Astrocyte of the spinal cord (primary cell): ENCODE measurements at regions of chr11 and their contacts with region 1.

Region 1: DNA sequence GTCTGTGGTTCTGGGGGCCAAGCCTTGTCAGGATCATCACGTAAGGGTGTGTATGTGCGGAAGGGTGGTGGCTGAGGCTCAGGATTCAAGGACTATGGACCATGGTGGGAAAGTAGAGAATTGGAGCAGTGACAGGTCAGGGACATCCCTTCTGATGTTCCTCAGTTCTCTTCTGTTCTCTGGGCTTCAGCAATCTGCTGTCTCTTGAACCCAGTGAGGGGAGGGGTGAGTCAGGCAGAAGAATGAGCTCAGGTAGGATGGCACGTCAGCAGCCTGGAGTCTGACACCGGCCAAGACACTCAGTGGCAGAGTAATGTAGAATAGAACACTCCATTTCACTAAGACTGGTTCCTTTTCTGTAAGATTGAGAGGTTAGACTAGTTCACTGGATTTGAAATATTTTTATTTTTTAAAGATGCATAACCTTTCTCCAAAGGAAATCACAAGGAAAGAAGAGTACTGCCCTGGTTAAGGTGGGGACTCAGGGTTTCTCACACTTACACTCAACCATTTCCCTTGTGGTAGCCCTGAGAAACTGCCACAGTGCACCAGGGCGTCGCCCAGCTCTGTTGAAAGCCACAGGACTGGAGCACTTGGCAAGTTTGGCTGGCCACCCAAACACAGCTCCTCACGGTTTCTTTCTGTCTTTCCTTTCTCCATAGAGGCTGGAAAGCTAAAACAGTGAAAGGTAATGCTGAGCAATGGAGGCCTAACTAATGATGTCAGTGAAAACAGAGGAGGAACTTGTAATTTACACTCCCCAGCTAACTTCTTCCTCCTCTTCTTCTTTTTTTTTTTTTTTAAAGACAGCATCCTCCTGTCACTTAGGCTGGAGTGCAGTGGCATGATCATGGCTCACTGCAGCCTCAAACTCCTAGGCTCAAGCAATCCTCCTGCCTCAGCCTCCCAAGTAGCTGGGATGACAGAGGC is 23.1 kb upstream of the MICAL2 start:
- DNase-seq: peak; percentile 79
- H3K4me3 ChIP-seq: peak overlapping the region; percentile 16
- CTCF ChIP-seq: peak; percentile 33

Region 2: DNA sequence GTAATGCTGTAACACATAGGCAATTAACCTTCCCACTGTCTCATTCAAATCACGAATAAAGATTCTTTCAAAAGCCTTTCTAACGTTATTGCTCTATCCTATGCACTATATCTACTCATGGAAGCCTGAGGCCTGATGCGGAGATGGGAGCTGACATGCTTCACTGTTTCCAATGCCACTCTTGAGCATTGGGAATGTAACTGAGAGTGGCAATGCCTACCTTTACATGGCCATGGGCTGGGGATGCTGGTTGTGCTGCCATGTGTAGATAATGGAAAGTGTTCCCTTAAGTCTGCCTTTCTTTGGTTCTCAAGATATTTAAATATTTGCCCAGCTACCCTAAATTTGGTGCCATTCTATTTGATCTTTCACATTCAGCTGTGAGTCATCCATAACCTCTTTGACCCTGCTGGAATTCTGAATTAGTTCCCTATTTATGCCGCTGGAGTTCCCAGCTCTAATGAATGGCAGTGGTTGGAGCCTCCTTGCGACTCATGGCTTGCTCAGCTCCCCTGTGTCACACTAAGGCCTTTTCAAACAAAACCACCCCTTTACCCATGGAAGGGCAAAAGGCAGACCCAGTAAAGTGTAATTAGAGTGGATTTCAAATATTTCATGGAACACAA is 57.5 kb before region 1 on chr11:
- in situ Hi-C with region 1: no loop called
- DNase-seq: no peak
- H3K4me3 ChIP-seq: no peak overlapping the region
- CTCF ChIP-seq: no peak

Region 3: DNA sequence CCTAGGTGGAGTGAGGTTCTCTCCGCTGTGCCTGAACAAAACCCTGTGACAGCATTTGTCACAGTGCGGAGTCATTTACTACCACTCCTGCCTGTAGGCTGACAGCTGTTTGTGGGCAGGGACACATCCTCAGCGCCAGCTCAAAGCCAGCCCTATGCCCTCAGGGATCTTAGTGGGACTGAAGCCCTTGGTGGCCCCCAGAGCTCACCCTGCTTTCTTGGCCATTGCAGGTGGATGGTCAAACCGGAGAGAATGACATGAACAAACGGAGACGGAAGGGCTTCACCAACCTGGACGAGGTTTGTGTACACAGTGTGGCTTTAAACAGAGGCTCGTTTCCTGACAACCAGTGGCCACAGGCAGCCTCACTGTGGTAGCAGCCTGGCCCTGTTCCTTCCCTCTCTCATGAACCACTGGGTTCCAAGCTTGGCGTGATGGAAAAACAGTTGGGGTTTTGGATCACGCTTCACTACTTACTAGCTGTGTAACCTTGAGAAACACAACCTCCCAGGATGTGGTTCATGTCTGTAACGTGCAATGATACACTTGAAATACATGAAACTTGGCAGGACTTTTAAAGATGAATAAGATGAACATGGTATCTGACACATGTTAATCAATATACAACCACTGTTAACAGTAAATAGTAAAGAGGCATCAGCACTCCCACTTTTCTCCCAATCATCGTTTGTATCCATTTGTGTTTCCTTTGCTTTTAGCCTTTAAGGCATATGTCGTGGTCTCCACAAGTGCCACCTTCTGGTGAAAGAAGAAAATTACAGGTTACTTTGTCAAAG is 148.8 kb after region 1 on chr11:
- in situ Hi-C with region 1: loop called (anchors 10 kb)
- DNase-seq: peak; percentile 85
- H3K4me3 ChIP-seq: no peak overlapping the region
- CTCF ChIP-seq: peak; percentile 59